CD8-positive, alpha-beta T cell (primary cell): ENCODE measurements at regions of chr2 and their contacts with region 1.

Region 1: GRCh38 chr2:230798769-230799399 is 65.9 kb upstream of the ITM2C start:
- DNase-seq: peak in 7 of 9 experiments; percentile 22 to 76 (median 51)
- ATAC-seq: peak; percentile 32
- H3K4me3 ChIP-seq: no peak overlapping the region
- H3K4me3 Mint-ChIP-seq: no peak overlapping the region
- H3K27ac ChIP-seq: no peak overlapping the region
- H3K27ac Mint-ChIP-seq: peak overlapping the region; percentile 74
- H3K4me1 ChIP-seq: peaks cover 33% of the 10 kb centered on the region
- H3K4me1 Mint-ChIP-seq: peaks cover 13% of the 10 kb centered on the region
- H3K27me3 ChIP-seq: no peaks in the 10 kb centered on the region
- H3K27me3 Mint-ChIP-seq: no peaks in the 10 kb centered on the region
- CTCF ChIP-seq: peak; percentile 87

Region 2: DNA sequence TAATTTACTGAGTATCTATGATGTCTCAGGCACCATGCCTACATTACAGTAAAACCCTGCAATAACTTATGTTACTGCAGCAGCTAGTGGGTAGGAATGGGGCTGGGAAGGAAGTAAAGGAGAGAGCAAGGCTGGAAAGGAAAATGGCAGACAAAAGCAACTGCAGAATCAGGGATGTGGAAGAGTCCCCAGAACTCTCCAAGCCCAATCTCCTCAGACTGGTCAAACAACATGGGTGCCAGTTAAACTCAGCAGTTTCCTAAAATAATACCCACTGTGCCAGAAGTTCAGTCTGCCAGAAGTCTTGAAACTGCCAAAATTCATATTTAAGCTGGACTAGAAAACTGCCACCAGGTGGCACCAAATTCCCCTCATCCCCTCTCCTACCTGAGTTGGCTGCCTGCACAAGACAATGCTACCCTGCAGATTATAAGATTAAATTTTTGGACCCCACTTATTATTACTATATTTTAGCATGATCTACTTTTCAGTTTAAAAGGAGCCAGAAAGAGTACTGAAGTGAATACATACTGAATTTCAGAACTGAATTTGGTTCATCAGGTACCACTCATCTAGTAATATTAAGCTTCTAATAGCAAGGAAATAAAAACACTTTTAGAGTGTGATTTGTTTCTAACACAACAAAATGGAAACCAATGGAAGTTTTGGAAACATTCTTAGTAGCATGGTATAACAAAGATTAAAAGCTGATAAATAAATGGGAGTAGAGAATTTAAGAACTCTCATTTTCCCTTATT is 997.7 kb before region 1 on chr2:
- CTCF ChIA-PET with region 1: no interaction called
- POLR2A ChIA-PET with region 1: no interaction called
- intact Hi-C with region 1: loop called in 1 of 2 experiments (anchors 5 kb)
- DNase-seq: peak; percentile 48 to 82 (median 75)
- ATAC-seq: peak; percentile 77
- H3K4me3 ChIP-seq: no peak overlapping the region
- H3K4me3 Mint-ChIP-seq: no peak overlapping the region
- H3K27ac ChIP-seq: no peak overlapping the region
- H3K27ac Mint-ChIP-seq: no peak overlapping the region
- H3K4me1 ChIP-seq: no peaks in the 10 kb centered on the region
- H3K4me1 Mint-ChIP-seq: no peaks in the 10 kb centered on the region
- H3K27me3 ChIP-seq: no peaks in the 10 kb centered on the region
- H3K27me3 Mint-ChIP-seq: no peaks in the 10 kb centered on the region
- CTCF ChIP-seq: peak; percentile 87

Region 3: GRCh38 chr2:230219419-230220331 is 579.2 kb before region 1 on chr2 and contains the start of gene SP110:
- CTCF ChIA-PET with region 1: no interaction called
- POLR2A ChIA-PET with region 1: no interaction called
- intact Hi-C with region 1: loop called (anchors 10 kb)
- DNase-seq: peak; percentile 52 to 89 (median 78)
- ATAC-seq: peak; percentile 93
- H3K4me3 ChIP-seq: peak within 1 kb of the TSS; percentile 90 to 96
- H3K4me3 Mint-ChIP-seq: peak within 1 kb of the TSS; percentile 98
- H3K27ac ChIP-seq: peak within 1 kb of the TSS; percentile 82 to 88
- H3K27ac Mint-ChIP-seq: peak within 1 kb of the TSS; percentile 99
- H3K4me1 ChIP-seq: peaks cover 36% of the 10 kb centered on the region
- H3K4me1 Mint-ChIP-seq: peaks cover 60% of the 10 kb centered on the region
- H3K27me3 ChIP-seq: no peaks in the 10 kb centered on the region
- H3K27me3 Mint-ChIP-seq: no peaks in the 10 kb centered on the region
- CTCF ChIP-seq: no peak
- total RNA-seq, gene SP110: 50.6 to 58.1 TPM

Region 4: GRCh38 chr2:230411570-230412370 is 387.1 kb before region 1 on chr2:
- CTCF ChIA-PET with region 1: interaction called, 5 read pairs
- POLR2A ChIA-PET with region 1: no interaction called
- intact Hi-C with region 1: loop called (anchors 10 kb)
- DNase-seq: peak in 8 of 9 experiments; percentile 37 to 83 (median 59)
- ATAC-seq: peak; percentile 67
- H3K4me3 ChIP-seq: peak overlapping the region; percentile 88 to 92
- H3K4me3 Mint-ChIP-seq: peak overlapping the region; percentile 100
- H3K27ac ChIP-seq: peak overlapping the region; percentile 83 to 92
- H3K27ac Mint-ChIP-seq: peak overlapping the region; percentile 100
- H3K4me1 ChIP-seq: peaks cover 53% of the 10 kb centered on the region
- H3K4me1 Mint-ChIP-seq: peaks cover 81% of the 10 kb centered on the region
- H3K27me3 ChIP-seq: no peaks in the 10 kb centered on the region
- H3K27me3 Mint-ChIP-seq: no peaks in the 10 kb centered on the region
- CTCF ChIP-seq: no peak

Region 5: GRCh38 chr2:230459216-230459615 is 339.7 kb before region 1 on chr2:
- CTCF ChIA-PET with region 1: no interaction called
- POLR2A ChIA-PET with region 1: no interaction called
- intact Hi-C with region 1: no loop called
- DNase-seq: no peak
- ATAC-seq: no peak
- H3K4me3 ChIP-seq: no peak overlapping the region
- H3K4me3 Mint-ChIP-seq: no peak overlapping the region
- H3K27ac ChIP-seq: no peak overlapping the region
- H3K27ac Mint-ChIP-seq: peak overlapping the region; percentile 16
- H3K4me1 ChIP-seq: peaks cover 19% of the 10 kb centered on the region
- H3K4me1 Mint-ChIP-seq: peaks cover 44% of the 10 kb centered on the region
- H3K27me3 ChIP-seq: no peaks in the 10 kb centered on the region
- H3K27me3 Mint-ChIP-seq: no peaks in the 10 kb centered on the region
- CTCF ChIP-seq: no peak

Region 6: GRCh38 chr2:230658877-230659652 is 139.8 kb before region 1 on chr2:
- CTCF ChIA-PET with region 1: interaction called, 7 read pairs
- POLR2A ChIA-PET with region 1: interaction called, 6 read pairs
- intact Hi-C with region 1: loop called in 1 of 2 experiments (anchors 5 kb)
- DNase-seq: peak in 5 of 9 experiments; percentile 20 to 66 (median 47)
- ATAC-seq: peak; percentile 47
- H3K4me3 ChIP-seq: peak overlapping the region in 1 of 2 experiments; percentile 23
- H3K4me3 Mint-ChIP-seq: peak overlapping the region; percentile 56
- H3K27ac ChIP-seq: peak overlapping the region in 1 of 2 experiments; percentile 55
- H3K27ac Mint-ChIP-seq: peak overlapping the region; percentile 91
- H3K4me1 ChIP-seq: peaks cover 78% of the 10 kb centered on the region
- H3K4me1 Mint-ChIP-seq: peaks cover 84% of the 10 kb centered on the region
- H3K27me3 ChIP-seq: no peaks in the 10 kb centered on the region
- H3K27me3 Mint-ChIP-seq: no peaks in the 10 kb centered on the region
- CTCF ChIP-seq: no peak

Region 7: GRCh38 chr2:230721712-230722111 is 77.2 kb before region 1 on chr2:
- CTCF ChIA-PET with region 1: interaction called, 10 read pairs
- POLR2A ChIA-PET with region 1: interaction called, 3 read pairs
- intact Hi-C with region 1: no loop called
- DNase-seq: peak in 2 of 9 experiments; percentile 17 to 49
- ATAC-seq: no peak
- H3K4me3 ChIP-seq: no peak overlapping the region
- H3K4me3 Mint-ChIP-seq: peak overlapping the region; percentile 9
- H3K27ac ChIP-seq: no peak overlapping the region
- H3K27ac Mint-ChIP-seq: peak overlapping the region; percentile 86
- H3K4me1 ChIP-seq: peaks cover 80% of the 10 kb centered on the region
- H3K4me1 Mint-ChIP-seq: peaks cover 86% of the 10 kb centered on the region
- H3K27me3 ChIP-seq: no peaks in the 10 kb centered on the region
- H3K27me3 Mint-ChIP-seq: no peaks in the 10 kb centered on the region
- CTCF ChIP-seq: no peak

Region 8: DNA sequence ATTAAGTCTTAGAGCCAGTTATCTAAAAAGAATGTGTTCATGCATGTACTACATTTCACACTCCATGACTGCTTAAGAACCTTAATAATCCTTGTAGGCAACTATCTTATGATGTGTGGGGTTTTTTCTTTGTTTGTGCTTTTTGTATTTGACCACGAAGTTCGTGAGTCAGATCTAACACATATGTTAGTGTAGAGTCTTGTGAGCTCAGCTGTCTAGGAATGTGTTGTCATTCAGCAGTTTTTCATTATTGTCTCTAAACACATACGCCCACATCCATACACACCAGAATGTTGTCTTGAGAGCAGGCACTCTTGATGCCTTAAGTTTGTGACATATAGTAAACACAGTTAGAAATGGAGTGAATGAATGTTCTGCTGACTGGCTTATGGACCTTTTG is 47.8 kb before region 1 on chr2:
- CTCF ChIA-PET with region 1: no interaction called
- POLR2A ChIA-PET with region 1: no interaction called
- intact Hi-C with region 1: no loop called
- DNase-seq: peak in 2 of 9 experiments; percentile 20 to 21
- ATAC-seq: peak; percentile 55
- H3K4me3 ChIP-seq: no peak overlapping the region
- H3K4me3 Mint-ChIP-seq: no peak overlapping the region
- H3K27ac ChIP-seq: no peak overlapping the region
- H3K27ac Mint-ChIP-seq: peak overlapping the region; percentile 53
- H3K4me1 ChIP-seq: peaks cover 33% of the 10 kb centered on the region
- H3K4me1 Mint-ChIP-seq: peaks cover 78% of the 10 kb centered on the region
- H3K27me3 ChIP-seq: no peaks in the 10 kb centered on the region
- H3K27me3 Mint-ChIP-seq: no peaks in the 10 kb centered on the region
- CTCF ChIP-seq: no peak

Region 9: GRCh38 chr2:230781130-230781797 is 17.6 kb before region 1 on chr2:
- CTCF ChIA-PET with region 1: interaction called, 33 read pairs
- POLR2A ChIA-PET with region 1: interaction called, 18 read pairs
- intact Hi-C with region 1: loop called in 1 of 2 experiments (anchors 1 kb)
- DNase-seq: peak in 8 of 9 experiments; percentile 7 to 86 (median 56)
- ATAC-seq: peak; percentile 96
- H3K4me3 ChIP-seq: no peak overlapping the region
- H3K4me3 Mint-ChIP-seq: peak overlapping the region; percentile 13
- H3K27ac ChIP-seq: peak overlapping the region in 1 of 2 experiments; percentile 34
- H3K27ac Mint-ChIP-seq: peak overlapping the region; percentile 84
- H3K4me1 ChIP-seq: peaks cover 42% of the 10 kb centered on the region
- H3K4me1 Mint-ChIP-seq: peaks cover 79% of the 10 kb centered on the region
- H3K27me3 ChIP-seq: no peaks in the 10 kb centered on the region
- H3K27me3 Mint-ChIP-seq: no peaks in the 10 kb centered on the region
- CTCF ChIP-seq: no peak